ENCODE measurements at regions of chr4 and their contacts with region 1.

Region 1: GRCh38 chr4:70505151-70505748 is 13.1 kb upstream of the AMTN start:
- DNase-seq: peak; percentile 59 to 72
- H3K4me3 ChIP-seq: no peak overlapping the region
- H3K27ac ChIP-seq: no peak overlapping the region
- H3K4me1 ChIP-seq: no peaks in the 10 kb centered on the region
- H3K27me3 ChIP-seq: no peaks in the 10 kb centered on the region
- CTCF ChIP-seq: peak; percentile 66 to 95 (median 82)
- POLR2A ChIP-seq: no peak

Region 2: DNA sequence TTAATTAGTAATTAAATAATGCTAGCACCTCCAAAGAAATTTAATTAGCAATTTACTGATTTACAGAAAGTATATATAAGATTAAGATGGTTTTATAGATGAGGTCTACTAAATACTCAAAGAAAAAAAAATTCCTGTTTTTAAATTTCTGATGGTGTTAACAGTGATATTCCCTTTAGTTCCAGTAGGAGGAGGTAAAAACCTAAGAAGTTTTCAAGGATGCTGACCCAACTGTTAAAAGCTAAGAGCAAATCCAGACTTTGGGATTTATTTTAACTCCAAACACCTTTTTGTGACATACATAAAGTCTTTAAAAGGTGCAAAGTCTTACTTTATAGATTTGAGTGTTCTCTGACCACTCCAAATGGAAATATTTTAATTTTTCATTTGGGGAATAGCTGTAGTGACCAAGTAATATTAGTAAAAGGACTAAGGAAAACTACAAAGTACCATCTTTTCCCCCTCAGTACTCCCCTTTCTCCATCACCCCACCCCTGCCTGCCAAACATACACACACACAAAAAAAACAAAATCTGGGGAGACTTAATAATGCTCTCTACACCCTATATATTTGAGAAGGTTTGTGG is 608.6 kb before region 1 on chr4:
- intact Hi-C with region 1: loop called (anchors 10 kb)
- DNase-seq: no peak
- H3K4me3 ChIP-seq: no peak overlapping the region
- H3K27ac ChIP-seq: no peak overlapping the region
- H3K4me1 ChIP-seq: no peaks in the 10 kb centered on the region
- H3K27me3 ChIP-seq: no peaks in the 10 kb centered on the region
- CTCF ChIP-seq: peak in 4 of 6 experiments; percentile 13 to 53 (median 52)
- POLR2A ChIP-seq: no peak

Region 3: DNA sequence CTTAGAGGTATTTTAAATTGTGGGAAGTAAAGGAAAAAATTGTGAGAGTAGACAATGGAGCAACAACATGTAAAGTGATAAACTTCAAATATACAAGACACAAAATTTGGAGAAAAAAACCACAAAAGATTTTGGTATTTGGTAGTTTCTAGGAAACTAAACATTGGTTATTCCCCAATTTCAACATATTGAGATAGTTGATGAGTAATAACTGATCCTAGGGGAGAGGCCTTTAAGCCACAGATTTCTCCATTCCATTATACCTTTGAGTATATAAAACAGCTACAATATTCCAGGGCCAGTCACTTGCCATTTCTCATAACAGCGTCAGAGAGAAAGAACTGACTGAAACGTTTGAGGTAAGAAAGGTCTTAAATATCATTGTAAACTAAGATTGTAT is 279.4 kb before region 1 on chr4 and contains the start of gene FDCSP:
- intact Hi-C with region 1: no loop called
- DNase-seq: no peak
- H3K4me3 ChIP-seq: no peak within 1 kb of the TSS
- H3K27ac ChIP-seq: no peak within 1 kb of the TSS
- H3K4me1 ChIP-seq: no peaks in the 10 kb centered on the region
- H3K27me3 ChIP-seq: no peaks in the 10 kb centered on the region
- CTCF ChIP-seq: no peak
- POLR2A ChIP-seq: no peak
- total RNA-seq, gene FDCSP: not detected

Region 4: DNA sequence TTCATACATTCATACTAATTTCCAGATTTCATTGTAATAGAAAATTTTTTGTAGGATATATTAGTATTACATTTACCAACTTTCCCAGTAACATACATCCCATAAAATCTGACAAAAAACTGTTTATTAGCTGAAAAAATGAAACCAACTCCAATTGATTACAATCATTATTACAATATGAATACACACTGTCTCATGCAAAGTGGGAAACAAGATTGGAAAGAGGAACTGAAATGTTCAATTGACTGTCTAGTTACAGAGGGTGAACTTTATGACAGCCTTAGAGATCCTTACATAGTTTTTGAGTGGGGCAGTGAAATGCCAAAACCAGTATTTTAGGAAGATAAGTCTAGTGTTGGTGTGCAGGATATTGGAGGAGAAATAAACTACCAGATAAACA is 84.5 kb after region 1 on chr4:
- intact Hi-C with region 1: no loop called
- DNase-seq: no peak
- H3K4me3 ChIP-seq: no peak overlapping the region
- H3K27ac ChIP-seq: no peak overlapping the region
- H3K4me1 ChIP-seq: no peaks in the 10 kb centered on the region
- H3K27me3 ChIP-seq: no peaks in the 10 kb centered on the region
- CTCF ChIP-seq: no peak
- POLR2A ChIP-seq: no peak

Region 5: GRCh38 chr4:70666369-70666768 is 161.1 kb after region 1 on chr4 and contains the start of gene JCHAIN:
- intact Hi-C with region 1: no loop called
- DNase-seq: no peak
- H3K4me3 ChIP-seq: no peak within 1 kb of the TSS
- H3K27ac ChIP-seq: no peak within 1 kb of the TSS
- H3K4me1 ChIP-seq: no peaks in the 10 kb centered on the region
- H3K27me3 ChIP-seq: no peaks in the 10 kb centered on the region
- CTCF ChIP-seq: no peak
- POLR2A ChIP-seq: no peak
- total RNA-seq, gene JCHAIN: 0.67 to 154 (median 3.7) TPM in 3 of 4 donors, not detected in the other

Region 6: DNA sequence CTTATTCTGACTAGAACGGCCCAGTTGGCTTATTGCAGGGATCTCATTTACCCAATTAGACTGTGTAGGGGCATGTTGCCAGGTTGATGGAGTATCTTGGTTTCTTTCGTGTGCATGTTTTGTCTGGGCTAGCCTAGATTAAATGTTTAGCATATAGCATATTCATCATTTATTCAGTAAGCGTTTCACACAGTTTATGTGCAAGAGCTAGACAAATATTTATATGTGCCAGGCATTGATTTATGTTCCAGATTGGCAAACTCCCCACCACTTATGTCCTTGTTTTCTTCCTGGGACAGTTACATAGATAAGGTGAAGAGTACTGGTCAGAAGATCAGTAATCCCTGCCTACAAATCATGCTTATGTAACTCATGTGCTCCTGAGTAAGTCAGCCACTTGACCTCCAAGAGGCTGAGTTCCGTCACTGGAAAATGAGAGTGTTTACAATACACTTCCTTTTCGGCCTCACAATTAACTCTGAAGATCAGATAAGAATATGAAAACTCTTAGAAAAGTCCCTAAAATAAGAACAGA is 273.7 kb after region 1 on chr4:
- intact Hi-C with region 1: no loop called
- DNase-seq: peak; percentile 74 to 75
- H3K4me3 ChIP-seq: no peak overlapping the region
- H3K27ac ChIP-seq: peak overlapping the region; percentile 42 to 81 (median 69)
- H3K4me1 ChIP-seq: peaks cover 0 to 10% of the 10 kb centered on the region in 2 donors
- H3K27me3 ChIP-seq: no peaks in the 10 kb centered on the region
- CTCF ChIP-seq: no peak
- POLR2A ChIP-seq: no peak

Measured in thyroid gland (tissue), 4 donors.